ENCODE measurements at regions of chr12 and their contacts with region 1.

Region 1: GRCh38 chr12:89225808-89226411 is 126.4 kb downstream of the DUSP6 start:
- DNase-seq: peak; percentile 72
- H3K4me3 Mint-ChIP-seq: peak overlapping the region; percentile 34
- H3K27ac Mint-ChIP-seq: peak overlapping the region; percentile 99
- H3K4me1 Mint-ChIP-seq: peaks cover 65% of the 10 kb centered on the region
- H3K27me3 Mint-ChIP-seq: no peaks in the 10 kb centered on the region

Region 2: DNA sequence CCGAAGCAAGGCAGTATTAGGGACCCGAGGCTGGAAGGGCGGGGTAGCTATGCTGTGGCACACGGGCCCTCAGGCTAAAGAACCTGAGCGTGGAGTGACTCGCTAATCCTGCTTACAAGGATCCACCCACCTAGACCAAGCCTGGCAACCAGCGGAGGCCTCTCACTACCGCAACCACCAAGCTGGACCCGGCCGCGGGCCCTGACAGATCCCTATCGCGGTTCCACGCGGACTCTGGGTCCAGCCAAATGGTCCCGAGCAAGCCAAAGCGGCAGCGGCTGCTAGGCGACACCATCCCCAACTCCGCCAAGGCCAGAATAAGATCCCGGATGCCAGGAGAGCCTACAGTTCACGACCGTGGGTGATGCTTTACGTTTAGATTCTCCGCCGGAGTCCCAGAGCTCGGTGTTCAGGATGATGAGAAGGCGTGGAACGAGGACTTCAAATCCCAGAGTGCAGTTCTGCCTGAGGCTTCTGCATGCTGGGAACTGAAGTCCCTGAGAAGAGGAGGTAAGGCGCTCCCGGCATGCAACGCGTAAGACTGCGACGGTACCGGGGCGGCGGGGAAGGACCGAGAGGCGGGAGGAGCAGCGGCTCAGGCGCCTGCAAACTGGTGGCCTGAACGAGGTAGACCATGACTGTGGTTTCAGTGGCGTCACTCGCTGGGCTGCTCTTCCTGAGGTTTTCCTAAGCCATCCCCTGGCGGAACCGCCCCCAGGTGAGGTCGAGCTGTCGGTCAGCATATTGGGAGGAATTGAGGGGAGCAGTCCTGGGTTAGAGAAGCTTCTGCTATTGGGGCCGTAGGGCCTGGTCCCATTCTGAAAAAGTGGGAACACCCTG is 1083.9 kb before region 1 on chr12 and contains the starts of genes CEP290 and TMTC3:
- CTCF ChIA-PET with region 1: no interaction called
- POLR2A ChIA-PET with region 1: no interaction called
- intact Hi-C with region 1: loop called (anchors 10 kb)
- DNase-seq: peak; percentile 95
- H3K4me3 Mint-ChIP-seq: peak within 1 kb of the TSS; percentile 96
- H3K27ac Mint-ChIP-seq: peak within 1 kb of the TSS; percentile 86
- H3K4me1 Mint-ChIP-seq: peaks cover 37% of the 10 kb centered on the region
- H3K27me3 Mint-ChIP-seq: no peaks in the 10 kb centered on the region
- total RNA-seq, gene CEP290: 12.8 to 13.7 TPM
- total RNA-seq, gene TMTC3: 5.3 to 6.8 TPM

Region 3: DNA sequence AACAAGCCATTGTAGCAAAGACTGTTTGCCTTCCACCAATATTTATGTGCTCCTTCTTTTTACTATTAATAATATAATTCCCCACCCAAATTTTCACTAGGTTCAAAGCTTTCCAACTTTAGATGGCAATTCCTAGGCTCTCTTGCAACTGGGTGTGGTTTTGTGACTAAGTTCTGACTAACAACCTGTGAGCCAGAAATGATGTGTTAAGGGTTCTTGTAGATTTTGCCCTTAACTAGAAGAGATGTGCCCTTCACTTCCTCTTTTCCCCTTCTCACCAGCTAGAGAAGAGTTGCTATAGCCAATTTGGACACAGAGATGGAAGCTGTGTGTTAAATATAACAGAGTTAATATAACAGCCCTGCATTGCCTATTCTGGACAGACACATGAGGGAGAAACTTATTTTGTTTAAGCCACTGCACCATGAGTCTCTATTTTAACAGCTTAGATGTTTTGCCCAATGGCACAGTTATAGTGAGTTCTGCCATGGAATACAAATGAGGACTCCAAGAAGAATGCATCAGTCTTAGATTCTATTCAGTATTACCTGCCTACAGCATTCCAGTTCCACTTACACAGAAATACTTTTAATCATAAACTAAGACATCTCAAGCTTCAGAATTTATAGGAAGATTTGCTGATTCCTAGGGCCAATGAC is 89.8 kb before region 1 on chr12:
- CTCF ChIA-PET with region 1: interaction called, 4 read pairs
- POLR2A ChIA-PET with region 1: interaction called, 3 read pairs
- intact Hi-C with region 1: loop called (anchors 1 kb)
- DNase-seq: no peak
- H3K4me3 Mint-ChIP-seq: no peak overlapping the region
- H3K27ac Mint-ChIP-seq: no peak overlapping the region
- H3K4me1 Mint-ChIP-seq: peaks cover 31% of the 10 kb centered on the region
- H3K27me3 Mint-ChIP-seq: no peaks in the 10 kb centered on the region

Region 4: DNA sequence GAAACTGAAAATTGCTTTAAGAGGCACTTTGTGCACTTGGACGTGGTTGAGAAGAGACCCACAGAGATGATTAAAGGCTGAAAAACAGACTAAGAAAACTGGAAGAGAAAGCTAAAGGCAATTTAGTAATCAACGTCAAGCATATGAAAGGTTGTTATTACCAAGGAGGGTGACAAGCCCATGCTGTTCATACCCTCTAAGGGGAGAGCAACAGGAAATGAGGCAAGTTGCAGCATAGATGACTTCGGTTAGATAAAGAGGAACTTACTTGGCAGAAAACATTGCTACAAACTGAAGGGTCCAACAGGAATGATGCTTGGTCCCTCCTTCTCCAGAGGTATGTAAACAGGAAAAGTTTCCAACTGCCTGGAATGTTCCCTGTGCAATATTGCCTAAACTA is 18.6 kb after region 1 on chr12:
- CTCF ChIA-PET with region 1: interaction called, 22 read pairs
- POLR2A ChIA-PET with region 1: interaction called, 34 read pairs
- intact Hi-C with region 1: loop called (anchors 1 kb)
- DNase-seq: peak; percentile 40
- H3K4me3 Mint-ChIP-seq: peak overlapping the region; percentile 25
- H3K27ac Mint-ChIP-seq: peak overlapping the region; percentile 86
- H3K4me1 Mint-ChIP-seq: peaks cover 39% of the 10 kb centered on the region
- H3K27me3 Mint-ChIP-seq: no peaks in the 10 kb centered on the region

Region 5: GRCh38 chr12:89470741-89471509 is 245.0 kb after region 1 on chr12:
- CTCF ChIA-PET with region 1: no interaction called
- POLR2A ChIA-PET with region 1: interaction called, 4 read pairs
- intact Hi-C with region 1: loop called (anchors 5 kb)
- DNase-seq: no peak
- H3K4me3 Mint-ChIP-seq: no peak overlapping the region
- H3K27ac Mint-ChIP-seq: peak overlapping the region; percentile 64
- H3K4me1 Mint-ChIP-seq: peaks cover 58% of the 10 kb centered on the region
- H3K27me3 Mint-ChIP-seq: no peaks in the 10 kb centered on the region

Region 6: GRCh38 chr12:89756585-89757321 is 530.8 kb after region 1 on chr12:
- CTCF ChIA-PET with region 1: no interaction called
- POLR2A ChIA-PET with region 1: no interaction called
- intact Hi-C with region 1: loop called (anchors 1 kb)
- DNase-seq: no peak
- H3K4me3 Mint-ChIP-seq: peak overlapping the region; percentile 44
- H3K27ac Mint-ChIP-seq: peak overlapping the region; percentile 79
- H3K4me1 Mint-ChIP-seq: peaks cover 36% of the 10 kb centered on the region
- H3K27me3 Mint-ChIP-seq: no peaks in the 10 kb centered on the region

Measured in activated CD4-positive, alpha-beta memory T cell treated with anti-CD3 and anti-CD28 coated beads for 36 hours (primary cell).